ENCODE measurements at regions of chr11 and their contacts with region 1.

Region 1: DNA sequence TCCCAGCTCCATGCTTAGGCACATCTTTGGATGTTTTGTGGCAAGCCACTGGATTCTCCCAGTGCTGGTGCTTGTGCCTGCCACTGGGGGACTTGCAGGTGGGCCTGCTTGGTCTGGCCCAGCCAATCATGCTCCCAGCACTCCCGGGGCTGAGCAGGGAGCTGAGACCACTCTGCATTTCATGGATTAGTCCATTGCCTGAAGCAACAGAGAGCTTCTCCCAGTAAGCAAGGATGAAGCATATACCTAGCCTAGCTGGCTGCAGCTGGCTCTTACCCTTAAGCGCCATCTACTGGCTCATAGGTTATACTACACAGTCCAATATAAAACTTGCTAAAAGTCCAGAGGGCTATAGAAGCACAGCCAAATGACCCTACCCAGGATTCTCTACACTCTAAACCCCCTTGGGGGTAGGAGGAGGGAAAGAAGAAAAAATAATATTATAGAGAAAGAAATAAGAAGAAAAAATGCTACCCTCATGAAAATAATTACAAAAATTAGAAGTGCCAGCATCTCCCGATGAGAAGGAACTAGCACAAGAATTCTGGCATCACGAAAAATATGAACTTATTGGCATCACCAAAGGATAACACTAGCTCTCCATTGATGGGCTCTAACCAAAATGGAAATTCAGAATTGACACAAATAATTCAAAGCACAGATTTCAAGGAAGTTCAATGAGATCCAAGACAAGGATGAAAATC is 275.3 kb downstream of the C11orf87 start:
- DNase-seq: peak; percentile 35
- H3K4me3 ChIP-seq: no peak overlapping the region
- H3K27ac ChIP-seq: no peak overlapping the region
- H3K4me1 ChIP-seq: no peaks in the 10 kb centered on the region
- H3K27me3 ChIP-seq: no peaks in the 10 kb centered on the region
- CTCF ChIP-seq: peak; percentile 67
- EP300 ChIP-seq: no peak
- RAD21 ChIP-seq: peak; percentile 93

Region 2: DNA sequence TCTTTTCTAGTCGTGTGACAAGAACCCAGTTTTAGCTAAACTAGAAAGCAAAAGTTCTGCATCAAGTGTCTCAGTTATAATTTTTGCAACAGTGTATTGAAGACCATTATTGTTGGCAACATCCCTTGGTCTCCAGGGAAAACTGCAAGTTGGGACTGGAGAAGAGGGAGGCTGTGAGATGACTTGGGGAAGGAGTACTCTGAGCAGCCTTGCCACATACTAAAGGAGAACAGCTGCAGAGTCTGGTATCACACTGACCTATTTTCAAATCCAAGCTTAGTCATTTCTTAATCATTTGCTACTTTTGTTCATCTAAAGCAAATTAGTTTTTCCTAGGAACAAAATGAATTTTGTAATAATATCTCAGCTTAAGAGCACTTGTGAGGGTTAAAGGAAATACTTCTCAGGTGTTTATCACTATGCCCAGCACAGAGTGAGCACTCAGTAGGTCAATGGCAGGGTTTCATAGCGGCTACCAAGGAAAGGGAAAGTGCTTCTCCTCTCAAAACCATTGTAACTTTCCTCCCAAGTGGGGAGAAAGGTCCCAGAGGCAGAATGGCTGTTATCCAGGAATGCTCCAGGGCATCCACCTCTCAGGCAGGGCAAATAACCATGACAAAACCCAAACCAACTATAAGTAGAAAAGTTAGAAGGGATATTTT is 28.2 kb before region 1 on chr11:
- CTCF ChIA-PET with region 1: interaction called, 11 read pairs
- POLR2A ChIA-PET with region 1: no interaction called
- DNase-seq: no peak
- H3K4me3 ChIP-seq: no peak overlapping the region
- H3K27ac ChIP-seq: no peak overlapping the region
- H3K4me1 ChIP-seq: no peaks in the 10 kb centered on the region
- H3K27me3 ChIP-seq: no peaks in the 10 kb centered on the region
- CTCF ChIP-seq: no peak
- EP300 ChIP-seq: no peak
- RAD21 ChIP-seq: no peak